B cell (primary cell): ENCODE measurements at regions of chr2 and their contacts with region 1.

Region 1: GRCh38 chr2:197191177-197191939 is 119.2 kb downstream of the ANKRD44 start:
- DNase-seq: peak; percentile 83
- ATAC-seq: peak; percentile 75
- H3K4me3 ChIP-seq: no peak overlapping the region
- H3K4me3 Mint-ChIP-seq: peak overlapping the region; percentile 2
- H3K27ac ChIP-seq: peak overlapping the region; percentile 27 to 62
- H3K27ac Mint-ChIP-seq: peak overlapping the region; percentile 80
- H3K4me1 ChIP-seq: peaks cover 47 to 53% of the 10 kb centered on the region in 2 donors
- H3K4me1 Mint-ChIP-seq: peaks cover 78% of the 10 kb centered on the region
- H3K27me3 ChIP-seq: no peaks in the 10 kb centered on the region
- H3K27me3 Mint-ChIP-seq: no peaks in the 10 kb centered on the region
- CTCF ChIP-seq: peak; percentile 85

Region 2: GRCh38 chr2:197152451-197153228 is 38.7 kb before region 1 on chr2:
- CTCF ChIA-PET with region 1: interaction called, 26 read pairs
- POLR2A ChIA-PET with region 1: no interaction called
- intact Hi-C with region 1: loop called (anchors 2 kb)
- DNase-seq: peak; percentile 89
- ATAC-seq: peak; percentile 87
- H3K4me3 ChIP-seq: peak overlapping the region; percentile 4 to 40 (median 29)
- H3K4me3 Mint-ChIP-seq: peak overlapping the region; percentile 74
- H3K27ac ChIP-seq: peak overlapping the region; percentile 93
- H3K27ac Mint-ChIP-seq: peak overlapping the region; percentile 90
- H3K4me1 ChIP-seq: peaks cover 81 to 88% of the 10 kb centered on the region in 2 donors
- H3K4me1 Mint-ChIP-seq: peaks cover 79% of the 10 kb centered on the region
- H3K27me3 ChIP-seq: no peaks in the 10 kb centered on the region
- H3K27me3 Mint-ChIP-seq: no peaks in the 10 kb centered on the region
- CTCF ChIP-seq: peak; percentile 69

Region 3: DNA sequence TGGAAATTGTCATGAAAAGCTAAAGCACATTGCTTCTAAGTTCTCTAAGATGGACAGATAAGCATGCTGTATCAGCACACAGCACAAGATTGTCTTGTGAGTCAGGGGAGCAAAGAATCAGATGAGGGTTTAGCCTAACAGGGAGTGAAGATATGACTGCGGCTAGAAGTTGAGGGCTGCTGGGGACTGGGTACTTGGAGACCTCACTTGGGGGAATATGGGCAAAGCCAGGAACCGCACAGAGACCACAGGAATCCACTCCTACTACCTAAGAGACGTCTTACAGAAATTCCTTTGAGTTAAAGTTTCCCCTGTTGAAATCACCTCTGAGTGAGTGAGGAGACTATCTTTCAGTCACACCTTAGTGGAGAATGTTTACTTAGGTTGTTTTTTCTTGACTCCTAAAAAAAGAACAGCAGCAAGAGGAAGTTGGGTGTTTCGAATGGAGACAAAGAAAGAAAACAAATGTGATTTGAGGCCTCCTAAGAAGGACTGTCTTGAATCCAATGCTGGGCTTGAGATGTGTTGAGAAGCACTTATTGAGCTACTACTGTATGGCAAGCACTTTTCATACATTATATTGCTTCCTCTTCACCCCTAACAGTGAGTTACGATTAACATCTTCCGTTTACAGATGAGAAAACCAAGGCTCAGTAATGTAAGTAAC is 18.5 kb after region 1 on chr2:
- CTCF ChIA-PET with region 1: interaction called, 33 read pairs
- POLR2A ChIA-PET with region 1: interaction called, 5 read pairs
- intact Hi-C with region 1: no loop called
- DNase-seq: peak; percentile 74
- ATAC-seq: peak; percentile 37
- H3K4me3 ChIP-seq: peak overlapping the region in 3 of 5 experiments; percentile 10 to 27 (median 21)
- H3K4me3 Mint-ChIP-seq: peak overlapping the region; percentile 84
- H3K27ac ChIP-seq: peak overlapping the region; percentile 94 to 95
- H3K27ac Mint-ChIP-seq: peak overlapping the region; percentile 99
- H3K4me1 ChIP-seq: peaks cover 92 to 99% of the 10 kb centered on the region in 2 donors
- H3K4me1 Mint-ChIP-seq: peaks cover 96% of the 10 kb centered on the region
- H3K27me3 ChIP-seq: no peaks in the 10 kb centered on the region
- H3K27me3 Mint-ChIP-seq: no peaks in the 10 kb centered on the region
- CTCF ChIP-seq: no peak

Region 4: DNA sequence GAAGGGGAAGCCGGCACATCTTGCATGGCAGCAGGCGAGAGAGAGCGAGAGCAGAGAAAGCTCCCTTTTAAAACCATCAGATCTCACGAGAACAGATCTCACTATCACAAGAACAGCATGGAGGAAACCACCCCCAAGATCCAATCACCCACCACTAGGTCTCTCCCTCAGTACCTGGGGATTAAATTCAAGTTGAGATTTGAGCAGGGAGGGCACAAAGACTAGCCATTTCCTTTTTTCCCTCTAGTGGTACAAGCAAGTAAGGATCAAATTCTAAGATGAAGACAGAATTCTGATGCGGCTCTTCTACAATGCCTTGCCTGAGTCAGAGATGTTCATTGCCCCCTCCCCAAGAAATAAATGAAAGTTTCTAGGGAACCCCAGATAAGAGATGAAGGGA is 164.8 kb after region 1 on chr2:
- CTCF ChIA-PET with region 1: interaction called, 4 read pairs
- POLR2A ChIA-PET with region 1: no interaction called
- intact Hi-C with region 1: loop called (anchors 1 kb)
- DNase-seq: peak; percentile 31
- ATAC-seq: peak; percentile 33
- H3K4me3 ChIP-seq: no peak overlapping the region
- H3K4me3 Mint-ChIP-seq: no peak overlapping the region
- H3K27ac ChIP-seq: no peak overlapping the region
- H3K27ac Mint-ChIP-seq: no peak overlapping the region
- H3K4me1 ChIP-seq: no peaks in the 10 kb centered on the region
- H3K4me1 Mint-ChIP-seq: no peaks in the 10 kb centered on the region
- H3K27me3 ChIP-seq: no peaks in the 10 kb centered on the region
- H3K27me3 Mint-ChIP-seq: no peaks in the 10 kb centered on the region
- CTCF ChIP-seq: peak; percentile 46

Region 5: GRCh38 chr2:197388866-197389587 is 197.7 kb after region 1 on chr2:
- CTCF ChIA-PET with region 1: no interaction called
- POLR2A ChIA-PET with region 1: no interaction called
- intact Hi-C with region 1: no loop called
- DNase-seq: no peak
- ATAC-seq: no peak
- H3K4me3 ChIP-seq: no peak overlapping the region
- H3K4me3 Mint-ChIP-seq: no peak overlapping the region
- H3K27ac ChIP-seq: no peak overlapping the region
- H3K27ac Mint-ChIP-seq: no peak overlapping the region
- H3K4me1 ChIP-seq: no peaks in the 10 kb centered on the region
- H3K4me1 Mint-ChIP-seq: no peaks in the 10 kb centered on the region
- H3K27me3 ChIP-seq: no peaks in the 10 kb centered on the region
- H3K27me3 Mint-ChIP-seq: no peaks in the 10 kb centered on the region
- CTCF ChIP-seq: no peak